ENCODE measurements at regions of chr1 and their contacts with region 1.

Region 1: GRCh38 chr1:19651141-19651737 is 7.1 kb downstream of the NBL1 start:
- DNase-seq: peak; percentile 75 to 87
- ATAC-seq: peak; percentile 82
- H3K4me3 ChIP-seq: no peak overlapping the region
- H3K27ac ChIP-seq: peak overlapping the region in 1 of 2 donors; percentile 66
- H3K4me1 ChIP-seq: no peaks in the 10 kb centered on the region
- H3K27me3 ChIP-seq: no peaks in the 10 kb centered on the region

Region 2: DNA sequence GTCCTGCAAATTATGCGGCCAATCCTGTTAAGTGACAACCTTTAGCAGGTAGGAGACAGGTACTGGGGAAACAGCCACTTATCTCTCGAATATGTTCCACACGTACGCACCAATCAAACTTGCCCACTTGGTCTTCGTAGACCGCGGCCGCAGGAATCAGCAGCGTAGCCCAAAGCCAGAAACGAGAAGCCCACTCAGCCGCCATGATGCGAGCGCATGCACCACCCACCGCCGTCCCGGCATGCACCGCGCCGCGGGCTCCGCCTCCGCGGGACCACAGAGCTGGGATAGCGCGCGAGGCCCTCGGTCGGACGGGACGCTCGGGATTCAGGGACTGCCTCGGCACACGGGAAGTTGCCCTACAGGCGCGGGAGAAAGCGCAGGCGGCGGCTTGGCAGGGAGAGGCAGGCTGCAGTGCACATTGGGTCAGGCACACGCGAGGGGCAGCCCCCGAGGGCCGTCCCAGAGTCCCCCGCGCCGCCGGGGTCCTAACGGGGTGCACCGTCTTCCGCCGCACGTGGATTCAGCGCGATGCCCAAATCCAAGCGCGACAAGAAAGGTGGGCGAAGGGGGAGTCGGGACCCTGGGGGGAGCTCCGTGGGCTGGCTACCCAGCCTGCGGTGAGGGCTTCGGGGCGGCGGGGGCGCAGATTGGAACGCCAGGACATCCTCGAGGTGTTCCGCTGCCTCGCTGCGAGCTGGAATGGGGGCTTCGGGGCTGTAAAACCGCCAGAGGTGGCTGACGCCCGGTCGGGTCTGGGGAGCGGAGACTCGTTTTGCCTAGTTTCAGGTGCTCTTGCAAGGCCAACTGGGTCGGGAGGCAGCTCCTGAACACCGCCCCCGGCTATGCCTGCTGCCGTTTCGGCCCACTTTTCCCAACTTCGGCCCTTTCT is 399.7 kb before region 1 on chr1 and contains the starts of genes EMC1 and MRTO4:
- intact Hi-C with region 1: loop called in 1 of 2 experiments (anchors 10 kb)
- DNase-seq: peak; percentile 90 to 97
- ATAC-seq: peak; percentile 96
- H3K4me3 ChIP-seq: peak within 1 kb of the TSS; percentile 51 to 87
- H3K27ac ChIP-seq: peak within 1 kb of the TSS in 1 of 2 donors; percentile 72
- H3K4me1 ChIP-seq: peaks cover 0 to 1% of the 10 kb centered on the region in 2 donors
- H3K27me3 ChIP-seq: no peaks in the 10 kb centered on the region
- total RNA-seq, gene EMC1: 33.9 to 35.0 TPM
- total RNA-seq, gene MRTO4: 13.0 to 14.2 TPM

Region 3: GRCh38 chr1:19341201-19342072 is 309.8 kb before region 1 on chr1:
- intact Hi-C with region 1: loop called (anchors 2 to 5 kb)
- DNase-seq: peak; percentile 82 to 93
- ATAC-seq: peak; percentile 73
- H3K4me3 ChIP-seq: no peak overlapping the region
- H3K27ac ChIP-seq: no peak overlapping the region
- H3K4me1 ChIP-seq: no peaks in the 10 kb centered on the region
- H3K27me3 ChIP-seq: no peaks in the 10 kb centered on the region

Region 4: GRCh38 chr1:19384113-19384512 is 267.1 kb before region 1 on chr1:
- intact Hi-C with region 1: loop called in 1 of 2 experiments (anchors 5 kb)
- DNase-seq: peak; percentile 74 to 89
- ATAC-seq: no peak
- H3K4me3 ChIP-seq: no peak overlapping the region
- H3K27ac ChIP-seq: peak overlapping the region in 1 of 2 donors; percentile 82
- H3K4me1 ChIP-seq: peaks cover 2 to 9% of the 10 kb centered on the region in 2 donors
- H3K27me3 ChIP-seq: no peaks in the 10 kb centered on the region

Region 5: GRCh38 chr1:19390901-19391595 is 260.2 kb before region 1 on chr1:
- intact Hi-C with region 1: loop called (anchors 5 kb)
- DNase-seq: peak in 1 of 2 donors; percentile 80
- ATAC-seq: peak; percentile 70
- H3K4me3 ChIP-seq: no peak overlapping the region
- H3K27ac ChIP-seq: peak overlapping the region; percentile 58 to 92
- H3K4me1 ChIP-seq: peaks cover under 1 to 2% of the 10 kb centered on the region in 2 donors
- H3K27me3 ChIP-seq: no peaks in the 10 kb centered on the region

Region 6: GRCh38 chr1:19762175-19762779 is 111.0 kb after region 1 on chr1:
- intact Hi-C with region 1: no loop called
- DNase-seq: no peak
- ATAC-seq: no peak
- H3K4me3 ChIP-seq: no peak overlapping the region
- H3K27ac ChIP-seq: no peak overlapping the region
- H3K4me1 ChIP-seq: no peaks in the 10 kb centered on the region
- H3K27me3 ChIP-seq: no peaks in the 10 kb centered on the region